ENCODE measurements at regions of chr5 and their contacts with region 1.

Region 1: GRCh38 chr5:72611118-72611730 is 104.0 kb upstream of the ZNF366 start:
- DNase-seq: peak; percentile 55
- ATAC-seq: peak; percentile 69
- H3K4me3 Mint-ChIP-seq: no peak overlapping the region
- H3K27ac Mint-ChIP-seq: no peak overlapping the region
- H3K4me1 Mint-ChIP-seq: no peaks in the 10 kb centered on the region
- H3K27me3 Mint-ChIP-seq: peaks cover 7% of the 10 kb centered on the region
- CTCF ChIP-seq: peak; percentile 82

Region 2: DNA sequence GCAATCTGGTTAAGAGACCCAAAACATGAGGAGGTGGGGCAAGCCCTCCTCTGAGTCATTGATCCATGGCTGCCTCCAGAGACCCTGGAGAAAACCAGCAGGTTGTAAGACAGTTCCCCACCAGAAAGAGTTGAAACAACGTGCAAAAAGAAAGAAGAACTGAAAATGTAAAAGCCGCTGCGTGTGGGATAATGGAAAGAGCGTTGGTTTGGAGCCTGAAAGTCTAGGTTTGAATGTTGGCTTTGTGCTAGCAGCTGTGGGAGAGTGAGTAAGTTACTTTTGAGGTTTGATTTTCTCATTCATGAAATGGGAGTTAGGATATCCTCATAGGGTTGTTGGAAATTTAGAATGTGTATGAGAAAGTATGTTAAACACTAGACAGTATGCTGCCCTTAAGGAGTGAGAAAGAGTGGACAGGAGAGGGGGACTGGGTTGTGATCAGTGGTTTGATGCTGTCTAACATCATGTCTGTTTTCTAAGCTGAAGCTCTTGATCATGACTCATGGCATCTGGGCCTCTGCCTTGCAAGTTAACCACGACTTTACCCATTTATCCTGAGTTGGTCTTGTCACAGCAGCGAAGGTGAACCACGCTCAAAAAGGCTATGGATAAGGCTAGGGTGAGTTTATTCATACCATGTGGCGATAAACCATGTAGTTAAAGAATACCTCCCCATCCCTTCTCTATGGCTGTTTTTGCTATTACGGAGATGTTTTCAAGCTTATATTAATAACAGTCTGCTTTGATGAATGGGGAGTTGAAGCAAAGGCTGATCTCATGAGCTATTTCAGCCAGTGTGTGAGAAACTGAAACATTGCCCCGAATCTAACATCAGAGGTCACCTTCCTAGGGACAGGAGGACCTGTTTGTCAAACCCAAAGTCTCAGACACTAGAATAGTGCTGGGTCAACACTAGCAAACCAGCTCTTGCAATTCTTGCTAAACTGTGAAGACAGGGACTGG is 145.3 kb before region 1 on chr5:
- CTCF ChIA-PET with region 1: no interaction called
- POLR2A ChIA-PET with region 1: no interaction called
- intact Hi-C with region 1: no loop called
- DNase-seq: peak; percentile 3
- ATAC-seq: peak; percentile 30
- H3K4me3 Mint-ChIP-seq: no peak overlapping the region
- H3K27ac Mint-ChIP-seq: no peak overlapping the region
- H3K4me1 Mint-ChIP-seq: peaks cover 2% of the 10 kb centered on the region
- H3K27me3 Mint-ChIP-seq: peaks cover 3% of the 10 kb centered on the region
- CTCF ChIP-seq: no peak

Region 3: DNA sequence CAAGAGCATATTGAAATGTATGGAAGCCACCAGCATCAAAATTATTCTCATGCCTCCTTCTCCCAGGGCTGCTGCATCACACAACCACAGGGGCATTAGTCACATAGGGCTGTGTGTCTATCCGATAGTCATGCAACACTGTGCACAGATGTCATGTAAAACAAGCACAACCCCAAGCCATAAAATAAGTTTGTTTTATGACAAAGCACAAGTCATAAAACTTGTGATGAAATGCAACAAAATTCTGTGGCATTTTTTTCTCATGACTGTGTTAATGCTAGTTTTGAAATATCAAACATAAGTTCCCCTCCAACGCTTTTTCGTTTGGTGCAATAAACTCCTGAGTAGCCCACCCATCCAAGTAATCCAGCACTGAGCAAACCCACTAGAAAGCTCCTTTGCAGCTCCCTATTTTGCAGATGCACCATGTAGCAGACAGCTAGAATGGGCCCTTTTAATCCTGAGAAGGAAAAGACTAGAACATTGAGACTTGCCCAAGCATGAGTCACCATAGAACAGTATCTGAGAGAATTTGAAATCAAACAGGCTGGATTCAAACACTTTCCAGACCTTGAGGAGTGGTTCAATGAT is 10.7 kb before region 1 on chr5:
- CTCF ChIA-PET with region 1: interaction called, 14 read pairs
- POLR2A ChIA-PET with region 1: no interaction called
- intact Hi-C with region 1: no loop called
- DNase-seq: no peak
- ATAC-seq: no peak
- H3K4me3 Mint-ChIP-seq: no peak overlapping the region
- H3K27ac Mint-ChIP-seq: no peak overlapping the region
- H3K4me1 Mint-ChIP-seq: no peaks in the 10 kb centered on the region
- H3K27me3 Mint-ChIP-seq: no peaks in the 10 kb centered on the region
- CTCF ChIP-seq: no peak

Region 4: DNA sequence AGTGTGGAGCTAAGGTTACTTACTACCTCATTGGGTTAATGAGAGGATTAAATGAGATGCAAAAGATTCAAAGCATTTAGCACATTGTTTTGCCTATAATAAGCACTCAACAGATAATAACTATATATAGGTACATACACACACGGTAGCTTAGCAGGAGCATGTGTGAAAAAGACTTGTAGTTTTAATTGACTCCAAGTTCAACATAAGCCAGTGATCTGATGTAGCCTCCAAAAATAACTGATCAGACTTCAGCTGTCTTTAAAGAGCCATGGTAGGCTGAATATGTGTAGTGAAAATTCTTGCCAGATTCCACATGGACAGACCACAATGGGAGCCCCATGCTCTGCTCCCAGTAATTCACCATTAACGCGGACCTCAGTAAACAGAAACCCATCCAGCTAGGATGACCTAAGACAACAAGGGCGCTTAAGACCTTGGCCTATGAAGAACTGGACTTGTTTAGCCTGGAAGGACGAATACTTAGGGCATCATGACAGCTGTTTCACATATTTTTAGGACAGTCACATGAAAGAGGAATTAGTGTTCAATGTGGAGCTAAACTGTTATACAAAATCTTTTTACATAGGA is 11.0 kb after region 1 on chr5:
- CTCF ChIA-PET with region 1: interaction called, 18 read pairs
- POLR2A ChIA-PET with region 1: interaction called, 3 read pairs
- intact Hi-C with region 1: no loop called
- DNase-seq: no peak
- ATAC-seq: no peak
- H3K4me3 Mint-ChIP-seq: no peak overlapping the region
- H3K27ac Mint-ChIP-seq: no peak overlapping the region
- H3K4me1 Mint-ChIP-seq: no peaks in the 10 kb centered on the region
- H3K27me3 Mint-ChIP-seq: peaks cover 10% of the 10 kb centered on the region
- CTCF ChIP-seq: no peak

Region 5: GRCh38 chr5:72630081-72630480 is 18.9 kb after region 1 on chr5:
- CTCF ChIA-PET with region 1: interaction called, 15 read pairs
- POLR2A ChIA-PET with region 1: interaction called, 3 read pairs
- intact Hi-C with region 1: no loop called
- DNase-seq: no peak
- ATAC-seq: no peak
- H3K4me3 Mint-ChIP-seq: no peak overlapping the region
- H3K27ac Mint-ChIP-seq: no peak overlapping the region
- H3K4me1 Mint-ChIP-seq: no peaks in the 10 kb centered on the region
- H3K27me3 Mint-ChIP-seq: peaks cover 19% of the 10 kb centered on the region
- CTCF ChIP-seq: no peak

Measured in activated CD8-positive, alpha-beta T cell treated with anti-CD3 and anti-CD28 coated beads for 36 hours (primary cell).